Activated T-helper 2 cell treated with anti-CD3 and anti-CD28 coated beads, Interferon-gamma antibody, Interleukin-2, Interleukin-4, amounts not matched to agents 10 μg/mL and 5 μg/mL and 100 μg/mL, durations not matched to agents 14 hours and 24 hours and 36 hours (primary cell): ENCODE measurements at regions of chr9 and their contacts with region 1.

Region 1: DNA sequence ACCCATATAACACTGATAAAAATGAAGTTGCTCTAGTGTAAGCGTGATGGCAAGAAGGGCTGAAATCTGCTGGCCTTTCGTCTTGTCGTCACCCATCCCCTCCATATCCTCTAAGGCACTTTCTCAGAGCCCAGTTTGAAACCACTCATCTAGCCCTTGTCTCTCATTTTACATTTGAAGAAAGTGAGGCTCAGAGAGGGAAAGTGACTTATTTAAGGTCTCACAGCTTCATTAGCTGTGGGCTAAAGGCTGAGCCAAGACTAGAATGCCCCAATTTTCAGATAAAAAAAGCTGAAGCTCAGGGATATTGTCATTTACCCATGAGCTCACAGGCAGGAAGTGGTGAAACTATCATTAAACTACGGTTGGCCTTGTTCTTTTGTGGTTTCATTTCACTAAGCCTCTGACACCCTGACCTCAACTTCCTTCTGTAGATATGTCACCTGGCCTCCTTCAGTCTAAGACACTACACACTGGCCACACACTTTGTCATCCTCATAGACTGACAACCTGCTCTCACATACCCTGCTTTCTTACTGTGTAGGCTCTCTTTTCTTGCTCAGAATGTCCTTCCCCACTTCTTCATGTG is 176.7 kb upstream of the DMAC1 start:
- DNase-seq: peak; percentile 69
- H3K4me3 Mint-ChIP-seq: no peak overlapping the region
- H3K27ac Mint-ChIP-seq: peak overlapping the region; percentile 63
- H3K4me1 Mint-ChIP-seq: peaks cover 66% of the 10 kb centered on the region
- H3K27me3 Mint-ChIP-seq: no peaks in the 10 kb centered on the region

Region 2: DNA sequence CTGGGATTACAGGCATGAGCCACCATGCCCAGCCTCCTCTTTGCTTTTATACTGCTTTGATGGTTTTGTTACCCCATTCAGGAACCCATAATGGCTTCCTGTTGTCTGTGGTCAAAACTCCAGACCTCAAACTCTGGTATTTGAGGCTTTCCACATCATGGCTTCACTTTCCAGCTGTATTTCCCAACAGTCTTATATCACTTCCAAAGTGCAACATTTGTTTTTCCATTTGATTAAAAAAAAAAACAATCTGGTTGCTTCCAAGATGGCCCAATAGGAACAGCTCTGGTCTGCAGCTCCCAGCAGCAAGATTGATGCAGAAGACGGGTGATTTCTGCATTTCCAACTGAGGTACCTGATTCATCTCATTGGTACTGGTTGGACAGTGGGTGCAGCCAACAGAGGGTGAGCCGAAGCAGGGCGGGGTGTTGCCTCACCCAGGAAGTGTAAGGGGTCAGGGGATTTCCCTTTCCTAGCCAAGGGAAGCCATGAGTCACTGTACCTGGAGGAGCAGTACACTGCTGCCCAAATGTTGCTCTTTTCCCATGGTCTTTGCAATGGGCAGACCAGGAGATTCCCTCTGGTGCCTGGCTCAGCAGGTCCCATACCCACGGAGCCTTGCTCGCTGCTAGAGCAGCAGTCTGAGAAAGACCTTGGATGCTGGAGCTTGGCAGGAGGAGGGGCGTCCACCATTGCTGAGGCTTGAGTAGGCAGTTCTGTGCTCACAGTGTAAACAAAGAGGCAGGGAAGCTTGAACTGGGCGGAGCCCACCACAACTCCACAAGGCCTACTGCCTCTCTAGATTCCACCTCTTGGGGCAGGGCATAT is 760.0 kb before region 1 on chr9:
- intact Hi-C with region 1: loop called (anchors 10 kb)
- DNase-seq: peak; percentile 47
- H3K4me3 Mint-ChIP-seq: no peak overlapping the region
- H3K27ac Mint-ChIP-seq: peak overlapping the region; percentile 53
- H3K4me1 Mint-ChIP-seq: peaks cover 29% of the 10 kb centered on the region
- H3K27me3 Mint-ChIP-seq: peaks cover 20% of the 10 kb centered on the region

Region 3: DNA sequence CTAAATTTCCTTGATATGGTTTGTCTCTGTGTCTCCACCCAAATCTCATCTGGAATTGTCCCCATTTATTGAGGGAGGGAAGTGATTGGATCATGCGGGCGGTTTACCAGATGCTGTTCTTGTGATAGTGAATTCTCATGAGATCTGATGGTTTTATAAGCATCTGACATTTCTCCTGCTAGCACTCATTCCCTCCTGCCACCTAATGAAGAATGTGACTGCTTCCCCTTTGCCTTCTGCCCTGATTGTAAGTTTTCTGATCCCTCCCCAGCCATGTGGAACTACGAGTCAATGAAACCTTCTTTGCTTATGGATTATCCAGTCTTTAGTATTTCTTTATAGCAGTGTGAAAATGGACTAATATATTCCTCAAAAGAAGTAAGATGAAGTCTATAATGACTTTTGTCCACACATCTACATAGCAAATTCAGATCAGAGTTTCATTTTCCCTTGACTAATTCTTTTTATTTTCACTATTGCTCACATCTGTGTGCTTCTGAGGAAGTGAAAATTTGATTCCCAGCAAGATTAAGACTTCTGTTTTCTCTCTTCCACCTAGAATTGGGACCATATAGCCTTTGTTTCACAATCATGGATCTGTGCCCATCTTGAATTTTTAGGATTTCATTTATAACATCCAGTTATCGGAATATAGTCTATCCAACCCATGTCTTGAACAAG is 570.2 kb before region 1 on chr9:
- intact Hi-C with region 1: loop called (anchors 2 kb)
- DNase-seq: no peak
- H3K4me3 Mint-ChIP-seq: no peak overlapping the region
- H3K27ac Mint-ChIP-seq: peak overlapping the region; percentile 40
- H3K4me1 Mint-ChIP-seq: peaks cover 42% of the 10 kb centered on the region
- H3K27me3 Mint-ChIP-seq: peaks cover 19% of the 10 kb centered on the region

Region 4: DNA sequence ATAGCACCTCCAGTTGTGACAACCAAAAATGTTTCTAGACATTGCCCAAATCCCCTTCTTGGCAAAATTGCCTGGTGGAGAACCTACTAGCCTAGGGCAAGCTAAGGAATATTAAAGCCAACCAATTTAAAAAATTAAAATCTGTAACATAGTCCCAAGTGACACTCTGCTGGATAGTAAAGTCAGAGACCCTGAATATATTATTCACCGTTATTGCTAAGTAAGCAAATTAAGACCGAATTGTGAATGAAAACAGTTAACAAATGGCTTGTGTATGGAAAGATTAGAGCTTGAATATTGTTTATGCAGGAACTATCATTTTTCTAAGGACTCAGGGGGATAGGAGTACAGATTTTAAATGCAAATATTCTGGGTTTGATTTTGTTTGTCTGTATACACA is 384.8 kb before region 1 on chr9:
- intact Hi-C with region 1: no loop called
- DNase-seq: no peak
- H3K4me3 Mint-ChIP-seq: no peak overlapping the region
- H3K27ac Mint-ChIP-seq: no peak overlapping the region
- H3K4me1 Mint-ChIP-seq: no peaks in the 10 kb centered on the region
- H3K27me3 Mint-ChIP-seq: no peaks in the 10 kb centered on the region

Region 5: GRCh38 chr9:7756088-7756487 is 220.2 kb before region 1 on chr9:
- intact Hi-C with region 1: loop called (anchors 1 kb)
- DNase-seq: peak; percentile 18
- H3K4me3 Mint-ChIP-seq: no peak overlapping the region
- H3K27ac Mint-ChIP-seq: peak overlapping the region; percentile 36
- H3K4me1 Mint-ChIP-seq: peaks cover 26% of the 10 kb centered on the region
- H3K27me3 Mint-ChIP-seq: no peaks in the 10 kb centered on the region

Region 6: DNA sequence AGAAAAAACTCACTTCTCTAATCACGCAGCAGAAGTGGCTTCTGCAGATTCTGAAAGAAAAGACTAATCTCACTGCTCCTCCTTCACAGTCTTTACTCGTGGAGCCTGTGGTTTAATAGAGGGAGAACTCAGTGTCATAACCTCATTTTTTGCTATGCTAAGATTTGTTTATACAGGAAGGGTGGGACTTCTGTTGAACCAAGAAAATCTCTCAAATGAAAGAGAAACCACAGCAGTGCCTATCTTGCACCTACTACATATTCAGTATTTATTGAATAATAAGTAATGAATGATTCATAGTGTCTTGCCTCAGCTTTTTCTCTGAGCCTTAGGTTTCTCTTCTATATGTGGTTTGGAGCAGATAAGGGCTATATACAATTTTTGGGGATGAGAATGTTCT is 40.6 kb before region 1 on chr9:
- intact Hi-C with region 1: loop called (anchors 1 kb)
- DNase-seq: peak; percentile 9
- H3K4me3 Mint-ChIP-seq: peak overlapping the region; percentile 37
- H3K27ac Mint-ChIP-seq: peak overlapping the region; percentile 74
- H3K4me1 Mint-ChIP-seq: peaks cover 17% of the 10 kb centered on the region
- H3K27me3 Mint-ChIP-seq: no peaks in the 10 kb centered on the region

Region 7: DNA sequence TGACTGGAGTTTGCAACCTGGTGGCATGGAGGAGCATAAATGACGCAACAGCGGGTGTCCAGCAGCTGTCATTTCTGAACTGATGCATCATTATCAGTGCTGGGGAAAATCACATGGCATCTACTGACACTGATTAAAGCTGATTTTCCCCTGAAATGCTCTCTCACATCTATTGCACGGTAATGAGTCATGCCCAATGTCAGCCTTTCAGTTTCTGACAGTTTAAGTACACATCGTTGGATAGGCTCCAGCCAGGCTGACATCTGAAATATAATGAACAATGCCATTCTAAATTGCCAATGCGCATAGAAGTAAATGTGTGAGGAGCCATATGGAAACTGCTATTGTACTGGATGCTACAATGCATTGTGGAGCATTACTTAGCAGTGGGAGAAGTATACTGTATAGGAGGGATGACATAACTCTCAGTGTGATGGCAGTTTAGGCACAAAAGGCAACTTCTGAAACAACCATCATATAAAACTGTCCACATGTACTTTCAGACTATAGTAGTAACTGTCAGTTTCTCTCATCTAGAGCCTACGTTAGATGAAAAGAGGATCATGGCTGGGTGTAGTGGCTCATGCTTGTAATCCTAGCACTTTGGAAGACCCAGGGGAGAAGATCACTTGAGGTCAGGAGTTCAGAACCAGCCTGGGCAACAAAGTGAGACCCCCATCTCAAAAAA is 212.6 kb after region 1 on chr9:
- intact Hi-C with region 1: loop called (anchors 1 kb)
- DNase-seq: no peak
- H3K4me3 Mint-ChIP-seq: no peak overlapping the region
- H3K27ac Mint-ChIP-seq: peak overlapping the region; percentile 46
- H3K4me1 Mint-ChIP-seq: peaks cover 18% of the 10 kb centered on the region
- H3K27me3 Mint-ChIP-seq: no peaks in the 10 kb centered on the region

Region 8: DNA sequence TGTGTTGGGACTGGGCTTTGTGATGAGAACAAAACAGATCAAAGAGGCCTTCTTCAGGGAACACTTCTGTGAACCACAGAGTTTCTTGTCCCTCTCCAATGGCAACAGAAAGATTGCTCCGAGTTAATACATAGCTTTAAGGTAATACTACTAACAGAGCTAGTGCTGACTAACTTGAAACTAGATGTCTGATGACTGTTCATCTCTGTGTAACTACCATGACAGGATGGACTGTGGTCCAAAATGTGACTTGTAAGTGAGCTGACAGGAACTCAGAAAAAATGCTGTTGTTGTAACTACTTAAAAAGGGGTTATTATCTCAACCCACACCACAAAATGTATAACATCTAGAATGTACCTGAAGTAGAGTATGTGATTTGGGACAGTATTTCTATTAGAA is 453.5 kb after region 1 on chr9:
- intact Hi-C with region 1: loop called (anchors 1 kb)
- DNase-seq: no peak
- H3K4me3 Mint-ChIP-seq: no peak overlapping the region
- H3K27ac Mint-ChIP-seq: peak overlapping the region; percentile 78
- H3K4me1 Mint-ChIP-seq: peaks cover 40% of the 10 kb centered on the region
- H3K27me3 Mint-ChIP-seq: no peaks in the 10 kb centered on the region